ENCODE measurements at regions of chr5 and their contacts with region 1.

Region 1: GRCh38 chr5:68389618-68390017 is 174.1 kb downstream of the PIK3R1 start:
- DNase-seq: no peak
- ATAC-seq: no peak
- H3K4me3 ChIP-seq: no peak overlapping the region
- H3K27ac ChIP-seq: no peak overlapping the region
- H3K4me1 ChIP-seq: no peaks in the 10 kb centered on the region
- H3K27me3 ChIP-seq: no peaks in the 10 kb centered on the region
- CTCF ChIP-seq: no peak
- EP300 ChIP-seq: no peak
- POLR2A ChIP-seq: no peak
- RAD21 ChIP-seq: no peak

Region 2: DNA sequence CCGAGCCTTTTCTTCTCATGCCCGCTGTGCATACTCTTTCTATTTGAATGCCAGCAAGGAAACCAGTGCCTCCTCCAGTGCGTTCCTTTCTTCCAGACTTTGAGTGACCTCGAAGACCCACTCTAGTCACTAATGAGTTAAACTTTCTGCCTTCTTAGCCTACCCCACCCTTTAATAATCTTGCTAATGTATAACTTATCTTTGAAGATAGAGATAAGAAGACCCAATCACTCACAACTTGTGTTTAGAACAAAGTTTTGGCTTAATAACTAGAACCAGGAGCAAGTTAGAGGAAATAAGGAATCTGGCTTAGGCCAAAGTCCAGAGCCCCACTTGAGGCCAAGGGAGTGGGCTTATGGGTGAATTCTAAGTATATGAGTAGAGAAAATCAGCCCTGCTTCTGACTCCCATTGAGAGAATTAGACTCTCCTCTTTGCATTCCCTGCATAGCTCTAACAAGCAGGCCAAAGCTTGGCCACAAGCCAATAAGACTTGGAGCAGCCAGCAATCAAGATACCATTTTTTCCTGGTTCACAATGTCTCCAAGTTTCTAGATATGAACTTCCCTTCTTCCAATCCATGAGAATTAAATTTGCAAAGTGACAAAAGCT is 355.6 kb before region 1 on chr5:
- CTCF ChIA-PET with region 1: no interaction called
- POLR2A ChIA-PET with region 1: no interaction called
- RAD21 ChIA-PET with region 1: no interaction called
- SMC1A ChIA-PET with region 1: no interaction called
- in situ Hi-C with region 1: no loop called
- intact Hi-C with region 1: no loop called
- DNase-seq: no peak
- ATAC-seq: no peak
- H3K4me3 ChIP-seq: no peak overlapping the region
- H3K27ac ChIP-seq: no peak overlapping the region
- H3K4me1 ChIP-seq: no peaks in the 10 kb centered on the region
- H3K27me3 ChIP-seq: no peaks in the 10 kb centered on the region
- CTCF ChIP-seq: no peak
- EP300 ChIP-seq: no peak
- POLR2A ChIP-seq: no peak
- RAD21 ChIP-seq: no peak

Region 3: GRCh38 chr5:68049053-68049713 is 340.4 kb before region 1 on chr5:
- CTCF ChIA-PET with region 1: no interaction called
- POLR2A ChIA-PET with region 1: no interaction called
- RAD21 ChIA-PET with region 1: no interaction called
- SMC1A ChIA-PET with region 1: no interaction called
- in situ Hi-C with region 1: no loop called
- intact Hi-C with region 1: no loop called
- DNase-seq: no peak
- ATAC-seq: no peak
- H3K4me3 ChIP-seq: no peak overlapping the region
- H3K27ac ChIP-seq: no peak overlapping the region
- H3K4me1 ChIP-seq: no peaks in the 10 kb centered on the region
- H3K27me3 ChIP-seq: no peaks in the 10 kb centered on the region
- CTCF ChIP-seq: no peak
- EP300 ChIP-seq: no peak
- POLR2A ChIP-seq: no peak
- RAD21 ChIP-seq: no peak

Region 4: DNA sequence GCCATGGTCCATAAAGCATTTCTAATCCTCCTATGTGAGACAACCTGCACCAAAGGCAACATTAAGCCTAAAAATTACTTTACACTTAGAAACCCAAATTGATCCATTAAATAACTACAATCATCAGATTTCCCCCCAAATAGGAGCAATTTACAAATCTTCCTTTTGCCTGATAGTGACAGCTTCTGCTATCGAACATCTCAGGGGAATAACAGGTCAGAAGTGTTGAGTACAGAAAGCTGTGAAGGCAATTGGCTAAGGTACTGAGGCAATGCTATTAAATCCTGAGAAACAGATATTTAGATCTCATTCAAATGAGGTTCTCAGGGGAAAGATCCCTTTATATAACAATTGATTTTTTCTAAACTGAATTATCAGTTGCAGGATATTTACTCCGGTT is 33.0 kb before region 1 on chr5:
- CTCF ChIA-PET with region 1: no interaction called
- POLR2A ChIA-PET with region 1: no interaction called
- RAD21 ChIA-PET with region 1: no interaction called
- SMC1A ChIA-PET with region 1: no interaction called
- in situ Hi-C with region 1: no loop called
- intact Hi-C with region 1: no loop called
- DNase-seq: no peak
- ATAC-seq: no peak
- H3K4me3 ChIP-seq: no peak overlapping the region
- H3K27ac ChIP-seq: no peak overlapping the region
- H3K4me1 ChIP-seq: no peaks in the 10 kb centered on the region
- H3K27me3 ChIP-seq: no peaks in the 10 kb centered on the region
- CTCF ChIP-seq: no peak
- EP300 ChIP-seq: no peak
- POLR2A ChIP-seq: no peak
- RAD21 ChIP-seq: no peak

Region 5: DNA sequence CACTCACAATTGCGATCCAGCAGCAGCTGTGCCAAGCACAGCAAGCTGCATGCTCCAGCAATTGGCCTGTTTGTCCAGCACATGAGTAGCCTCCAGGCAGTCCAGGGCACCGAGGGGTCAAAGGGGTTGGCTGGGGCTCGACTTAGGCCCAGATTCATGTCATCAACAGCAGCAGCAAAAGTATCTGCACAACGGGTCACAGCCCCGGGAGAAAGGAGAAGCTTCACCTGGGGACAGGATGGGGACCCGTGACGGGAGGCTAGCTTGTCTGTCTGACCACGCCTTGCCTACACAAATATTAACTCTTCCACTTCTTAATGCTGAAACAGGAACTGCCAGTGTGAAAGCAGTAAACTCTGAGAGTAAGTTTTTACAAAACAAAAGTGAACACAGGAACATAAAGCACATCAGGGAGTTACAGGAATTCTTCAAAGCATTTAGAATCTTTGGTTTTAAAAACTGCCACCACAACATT is 17.2 kb after region 1 on chr5:
- CTCF ChIA-PET with region 1: interaction called, 3 read pairs
- POLR2A ChIA-PET with region 1: no interaction called
- RAD21 ChIA-PET with region 1: interaction called, 4 read pairs
- SMC1A ChIA-PET with region 1: interaction called, 16 read pairs
- in situ Hi-C with region 1: no loop called
- intact Hi-C with region 1: no loop called
- DNase-seq: peak; percentile 26
- ATAC-seq: peak; percentile 95
- H3K4me3 ChIP-seq: no peak overlapping the region; the same call in 1 of the 2 replicates
- H3K27ac ChIP-seq: peak overlapping the region; percentile 10; the same call in 1 of the 2 replicates
- H3K4me1 ChIP-seq: peaks cover 5% of the 10 kb centered on the region
- H3K27me3 ChIP-seq: no peaks in the 10 kb centered on the region
- CTCF ChIP-seq: no peak
- EP300 ChIP-seq: no peak
- POLR2A ChIP-seq: no peak
- RAD21 ChIP-seq: no peak